HCT116 (cell line): ENCODE measurements at regions of chr12 and their contacts with region 1.

Region 1: GRCh38 chr12:55073043-55074022 is 52.9 kb upstream of the OR9K2 start:
- DNase-seq: peak; percentile 66
- ATAC-seq: 0 out of 2 replicates have a peak, but pooled peaks have one; percentile 35
- H3K4me3 ChIP-seq: no peak overlapping the region
- H3K27ac ChIP-seq: no peak overlapping the region
- H3K4me1 ChIP-seq: no peaks in the 10 kb centered on the region
- H3K27me3 ChIP-seq: peaks cover 17% of the 10 kb centered on the region
- CTCF ChIP-seq: peak; percentile 71 to 87 (median 79)
- POLR2A ChIP-seq: no peak
- RAD21 ChIP-seq: peak; percentile 84

Region 2: GRCh38 chr12:54935235-54935951 is 137.9 kb before region 1 on chr12:
- CTCF ChIA-PET with region 1: no interaction called
- POLR2A ChIA-PET with region 1: no interaction called
- RAD21 ChIA-PET with region 1: no interaction called
- intact Hi-C with region 1: no loop called
- DNase-seq: peak; percentile 77
- ATAC-seq: peak; percentile 89
- H3K4me3 ChIP-seq: peak overlapping the region in 1 of 2 experiments; percentile 39; a peak in 2 of 4 replicates
- H3K27ac ChIP-seq: peak overlapping the region; percentile 55; the same call in 1 of the 2 replicates
- H3K4me1 ChIP-seq: peaks cover 5 to 43% of the 10 kb centered on the region in 2 experiments; a peak in 3 of 4 replicates
- H3K27me3 ChIP-seq: no peaks in the 10 kb centered on the region
- CTCF ChIP-seq: peak in 2 of 3 experiments; percentile 13 to 31; a peak in 1 of 6 replicates
- POLR2A ChIP-seq: no peak
- RAD21 ChIP-seq: peak; percentile 68

Region 3: GRCh38 chr12:55142669-55143565 is 69.6 kb after region 1 on chr12:
- CTCF ChIA-PET with region 1: interaction called, 5 read pairs
- POLR2A ChIA-PET with region 1: no interaction called
- RAD21 ChIA-PET with region 1: no interaction called
- intact Hi-C with region 1: loop called (anchors 5 kb)
- DNase-seq: peak; percentile 41
- ATAC-seq: peak; percentile 90
- H3K4me3 ChIP-seq: no peak overlapping the region
- H3K27ac ChIP-seq: no peak overlapping the region
- H3K4me1 ChIP-seq: no peaks in the 10 kb centered on the region
- H3K27me3 ChIP-seq: no peaks in the 10 kb centered on the region; the same call in 1 of the 2 replicates
- CTCF ChIP-seq: peak; percentile 71 to 81 (median 80); a peak in 5 of 6 replicates
- POLR2A ChIP-seq: no peak
- RAD21 ChIP-seq: peak; percentile 67